ENCODE measurements at regions of chr7 and their contacts with region 1.

Region 1: DNA sequence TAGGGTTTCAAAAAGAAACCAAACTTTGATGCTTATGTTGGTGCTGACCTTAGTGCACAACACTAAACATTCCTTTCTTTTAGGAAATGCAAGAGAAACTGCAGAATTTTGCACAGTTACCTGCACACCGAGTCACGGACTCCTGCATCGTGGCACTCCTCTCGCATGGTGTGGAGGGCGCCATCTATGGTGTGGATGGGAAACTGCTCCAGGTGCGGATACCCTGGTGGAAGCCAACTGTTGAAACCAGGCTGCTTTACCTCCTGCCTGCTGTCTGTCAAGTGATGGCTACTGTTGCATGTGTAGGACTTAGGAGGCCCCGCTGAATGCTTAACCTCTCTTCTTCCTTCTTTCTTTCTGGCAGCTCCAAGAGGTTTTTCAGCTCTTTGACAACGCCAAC is 11.7 kb downstream of the CASP2 start:
- DNase-seq: peak; percentile 52
- ATAC-seq: peak; percentile 5; the same call in 1 of the 2 replicates
- H3K4me3 ChIP-seq: no peak overlapping the region
- H3K27ac ChIP-seq: peak overlapping the region; percentile 77
- H3K4me1 ChIP-seq: peaks cover 60% of the 10 kb centered on the region
- H3K27me3 ChIP-seq: no peaks in the 10 kb centered on the region
- CTCF ChIP-seq: peak; percentile 83

Region 2: GRCh38 chr7:143222782-143223181 is 77.1 kb before region 1 on chr7:
- CTCF ChIA-PET with region 1: no interaction called
- POLR2A ChIA-PET with region 1: no interaction called
- intact Hi-C with region 1: no loop called
- DNase-seq: no peak
- ATAC-seq: no peak
- H3K4me3 ChIP-seq: no peak overlapping the region
- H3K27ac ChIP-seq: no peak overlapping the region
- H3K4me1 ChIP-seq: no peaks in the 10 kb centered on the region
- H3K27me3 ChIP-seq: peaks cover 12% of the 10 kb centered on the region; the same call in 1 of the 2 replicates
- CTCF ChIP-seq: no peak

Region 3: GRCh38 chr7:143263266-143264195 is 36.3 kb before region 1 on chr7 and contains the start of gene GSTK1:
- CTCF ChIA-PET with region 1: interaction called, 5 read pairs
- POLR2A ChIA-PET with region 1: interaction called, 13 read pairs
- intact Hi-C with region 1: no loop called
- DNase-seq: peak; percentile 69
- ATAC-seq: peak; percentile 98
- H3K4me3 ChIP-seq: peak within 1 kb of the TSS; percentile 83
- H3K27ac ChIP-seq: peak within 1 kb of the TSS; percentile 6
- H3K4me1 ChIP-seq: peaks cover 31% of the 10 kb centered on the region
- H3K27me3 ChIP-seq: no peaks in the 10 kb centered on the region
- CTCF ChIP-seq: no peak
- total RNA-seq, gene GSTK1: 111 and 117 TPM in 2 replicates

Region 4: GRCh38 chr7:143279186-143280098 is 20.4 kb before region 1 on chr7:
- CTCF ChIA-PET with region 1: no interaction called
- POLR2A ChIA-PET with region 1: interaction called, 5 read pairs
- intact Hi-C with region 1: loop called (anchors 1 kb)
- DNase-seq: peak; percentile 91
- ATAC-seq: peak; percentile 80
- H3K4me3 ChIP-seq: peak overlapping the region; percentile 20; the same call in 1 of the 2 replicates
- H3K27ac ChIP-seq: peak overlapping the region; percentile 57
- H3K4me1 ChIP-seq: peaks cover 34% of the 10 kb centered on the region
- H3K27me3 ChIP-seq: no peaks in the 10 kb centered on the region
- CTCF ChIP-seq: no peak

Region 5: GRCh38 chr7:143287935-143288826 is 11.7 kb before region 1 on chr7 and contains the start of gene CASP2:
- CTCF ChIA-PET with region 1: interaction called, 5 read pairs
- POLR2A ChIA-PET with region 1: interaction called, 3 read pairs
- intact Hi-C with region 1: loop called (anchors 1 kb)
- DNase-seq: peak; percentile 92
- ATAC-seq: peak; percentile 71
- H3K4me3 ChIP-seq: peak within 1 kb of the TSS; percentile 95
- H3K27ac ChIP-seq: peak within 1 kb of the TSS; percentile 87
- H3K4me1 ChIP-seq: peaks cover 47% of the 10 kb centered on the region
- H3K27me3 ChIP-seq: no peaks in the 10 kb centered on the region
- CTCF ChIP-seq: 0 out of 2 replicates have a peak, but pooled peaks have one; percentile 13
- total RNA-seq, gene CASP2: 25.1 and 26.4 TPM in 2 replicates

Measured in PC-3 (cell line).